AG04450 (cell line): ENCODE measurements at regions of chr15 and their contacts with region 1.

Region 1: GRCh38 chr15:99733268-99734039 is at the start of gene LYSMD4:
- DNase-seq: peak; percentile 66
- H3K4me3 ChIP-seq: peak within 1 kb of the TSS; percentile 75
- H3K27ac ChIP-seq: peak within 1 kb of the TSS; percentile 57
- H3K27me3 ChIP-seq: peaks cover 3% of the 10 kb centered on the region
- CTCF ChIP-seq: no peak
- polyA plus RNA-seq, gene LYSMD4: 3.2 and 3.3 TPM in 2 replicates

Region 2: GRCh38 chr15:99282121-99282520 is 451.3 kb before region 1 on chr15:
- CTCF ChIA-PET with region 1: interaction called, 22 read pairs
- POLR2A ChIA-PET with region 1: interaction called, 3 read pairs
- DNase-seq: no peak
- H3K4me3 ChIP-seq: no peak overlapping the region
- H3K27ac ChIP-seq: no peak overlapping the region
- H3K27me3 ChIP-seq: no peaks in the 10 kb centered on the region
- CTCF ChIP-seq: no peak

Region 3: GRCh38 chr15:99755692-99756409 is 22.4 kb after region 1 on chr15:
- CTCF ChIA-PET with region 1: interaction called, 11 read pairs
- POLR2A ChIA-PET with region 1: no interaction called
- DNase-seq: peak; percentile 18
- H3K4me3 ChIP-seq: no peak overlapping the region
- H3K27ac ChIP-seq: no peak overlapping the region
- H3K27me3 ChIP-seq: peaks cover 4% of the 10 kb centered on the region
- CTCF ChIP-seq: peak; percentile 89